Naive thymus-derived CD4-positive, alpha-beta T cell (primary cell): ENCODE measurements at regions of chr16 and their contacts with region 1.

Region 1: GRCh38 chr16:57013229-57013628 is 23.9 kb downstream of the NLRC5 start:
- DNase-seq: no peak
- ATAC-seq: no peak
- H3K4me3 ChIP-seq: peak overlapping the region; percentile 24
- H3K4me3 Mint-ChIP-seq: peak overlapping the region in 9 of 10 donors; percentile 36 to 87 (median 72)
- H3K27ac ChIP-seq: peak overlapping the region; percentile 80
- H3K27ac Mint-ChIP-seq: peak overlapping the region; percentile 88 to 98 (median 94)
- H3K4me1 ChIP-seq: peaks cover 81 to 83% of the 10 kb centered on the region in 2 donors
- H3K4me1 Mint-ChIP-seq: peaks cover 53 to 94% (median 82%) of the 10 kb centered on the region in 7 donors
- H3K27me3 ChIP-seq: no peaks in the 10 kb centered on the region
- H3K27me3 Mint-ChIP-seq: no peaks in the 10 kb centered on the region

Region 2: GRCh38 chr16:57000271-57001025 is 12.8 kb before region 1 on chr16:
- CTCF ChIA-PET with region 1: interaction called, 3 read pairs
- POLR2A ChIA-PET with region 1: interaction called, 182 read pairs
- intact Hi-C with region 1: loop called (anchors 1 kb)
- DNase-seq: peak in 1 of 9 donors; percentile 55
- ATAC-seq: peak; percentile 40
- H3K4me3 ChIP-seq: peak overlapping the region; percentile 33
- H3K4me3 Mint-ChIP-seq: peak overlapping the region; percentile 20 to 98 (median 63)
- H3K27ac ChIP-seq: peak overlapping the region; percentile 77
- H3K27ac Mint-ChIP-seq: peak overlapping the region; percentile 74 to 93 (median 91)
- H3K4me1 ChIP-seq: peaks cover 78 to 79% of the 10 kb centered on the region in 2 donors
- H3K4me1 Mint-ChIP-seq: peaks cover 78 to 99% (median 89%) of the 10 kb centered on the region in 7 donors
- H3K27me3 ChIP-seq: no peaks in the 10 kb centered on the region
- H3K27me3 Mint-ChIP-seq: no peaks in the 10 kb centered on the region

Region 3: DNA sequence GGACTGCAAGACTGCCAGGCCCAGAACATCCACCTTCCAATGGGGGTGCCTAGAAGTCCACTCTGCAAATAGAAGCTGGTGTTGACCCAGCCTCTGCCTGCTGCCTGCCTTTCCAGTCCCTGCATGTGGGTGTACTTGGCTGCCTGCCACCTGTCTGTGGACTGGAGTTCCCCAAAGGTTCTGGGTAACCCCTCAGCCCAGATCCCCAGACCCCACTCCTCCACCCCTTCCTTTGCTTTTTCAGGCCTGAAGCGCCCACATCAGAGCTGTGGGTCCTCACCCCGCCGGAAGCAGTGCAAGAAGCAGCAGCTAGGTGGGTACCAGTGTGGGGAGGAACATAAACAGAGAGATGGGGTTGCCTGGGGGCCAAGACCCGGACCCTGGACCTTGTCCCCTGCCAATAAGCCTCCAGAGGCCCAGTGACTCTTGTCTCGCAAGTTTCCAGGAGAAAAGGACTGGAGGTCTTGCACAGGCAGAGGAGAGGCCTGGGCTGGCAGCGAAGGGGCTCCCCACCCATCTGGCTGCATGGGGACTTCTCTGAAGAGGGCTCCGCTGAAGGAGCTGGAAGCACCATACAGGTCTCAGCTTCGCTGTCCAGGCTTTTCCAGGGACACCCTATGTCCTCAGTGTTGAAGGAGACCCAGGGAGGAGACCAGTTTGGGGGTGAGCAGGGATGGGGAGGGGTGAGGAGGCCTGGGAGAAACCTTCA is 10.5 kb after region 1 on chr16:
- CTCF ChIA-PET with region 1: interaction called, 3 read pairs
- POLR2A ChIA-PET with region 1: interaction called, 11 read pairs
- intact Hi-C with region 1: loop called (anchors 1 kb)
- DNase-seq: peak; percentile 54 to 80 (median 70)
- ATAC-seq: peak; percentile 95
- H3K4me3 ChIP-seq: peak overlapping the region; percentile 25
- H3K4me3 Mint-ChIP-seq: peak overlapping the region; percentile 60 to 87 (median 75)
- H3K27ac ChIP-seq: peak overlapping the region; percentile 68
- H3K27ac Mint-ChIP-seq: peak overlapping the region; percentile 77 to 94 (median 90)
- H3K4me1 ChIP-seq: peaks cover 53 to 79% of the 10 kb centered on the region in 2 donors
- H3K4me1 Mint-ChIP-seq: peaks cover 74 to 99% (median 92%) of the 10 kb centered on the region in 7 donors
- H3K27me3 ChIP-seq: no peaks in the 10 kb centered on the region
- H3K27me3 Mint-ChIP-seq: no peaks in the 10 kb centered on the region

Region 4: GRCh38 chr16:57039148-57039812 is 26.1 kb after region 1 on chr16:
- CTCF ChIA-PET with region 1: interaction called, 4 read pairs
- POLR2A ChIA-PET with region 1: interaction called, 40 read pairs
- intact Hi-C with region 1: loop called (anchors 1 kb)
- DNase-seq: peak in 7 of 9 donors; percentile 27 to 50 (median 37)
- ATAC-seq: peak; percentile 24
- H3K4me3 ChIP-seq: peak overlapping the region; percentile 45
- H3K4me3 Mint-ChIP-seq: peak overlapping the region; percentile 55 to 95 (median 76)
- H3K27ac ChIP-seq: peak overlapping the region; percentile 72
- H3K27ac Mint-ChIP-seq: peak overlapping the region; percentile 88 to 99 (median 93)
- H3K4me1 ChIP-seq: peaks cover 82 to 94% of the 10 kb centered on the region in 2 donors
- H3K4me1 Mint-ChIP-seq: peaks cover 66 to 99% (median 86%) of the 10 kb centered on the region in 7 donors
- H3K27me3 ChIP-seq: no peaks in the 10 kb centered on the region
- H3K27me3 Mint-ChIP-seq: no peaks in the 10 kb centered on the region